Sigmoid colon (tissue), 7 donors: ENCODE measurements at regions of chr1 and their contacts with region 1.

Region 1: DNA sequence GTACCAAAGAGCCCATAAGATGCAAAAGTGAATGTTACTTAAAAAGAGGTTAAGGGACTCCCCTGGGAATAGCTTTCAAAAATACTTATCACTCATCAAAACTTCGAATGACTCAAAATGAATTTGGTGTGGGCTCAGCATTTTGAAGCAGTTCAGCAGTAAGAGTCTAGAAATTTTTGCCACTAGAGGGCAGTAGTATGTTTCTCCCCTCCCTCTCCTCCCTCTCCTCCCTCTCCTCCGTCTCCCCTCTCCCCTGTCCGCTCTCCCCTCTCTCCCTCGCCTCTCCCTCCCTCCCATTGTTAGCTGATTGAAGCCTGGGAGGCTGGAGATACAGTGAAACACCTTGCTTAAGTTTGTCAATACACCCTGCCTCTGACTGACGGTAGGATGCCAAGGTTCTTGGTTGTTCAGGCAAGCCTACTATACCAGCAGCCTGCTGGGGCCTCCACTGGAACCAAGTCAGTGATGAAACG is 70.8 kb upstream of the TENT5C start:
- DNase-seq: no peak
- H3K4me3 ChIP-seq: no peak overlapping the region
- H3K27ac ChIP-seq: no peak overlapping the region
- H3K4me1 ChIP-seq: no peaks in the 10 kb centered on the region
- H3K27me3 ChIP-seq: no peaks in the 10 kb centered on the region
- CTCF ChIP-seq: peak; percentile 50 to 74 (median 70)
- EP300 ChIP-seq: no peak
- POLR2A ChIP-seq: no peak

Region 2: GRCh38 chr1:117674521-117675397 is 139.7 kb after region 1 on chr1:
- intact Hi-C with region 1: loop called (anchors 2 kb)
- DNase-seq: no peak
- H3K4me3 ChIP-seq: no peak overlapping the region
- H3K27ac ChIP-seq: no peak overlapping the region
- H3K4me1 ChIP-seq: peaks cover 2 to 28% (median 24%) of the 10 kb centered on the region in 4 donors
- H3K27me3 ChIP-seq: no peaks in the 10 kb centered on the region
- CTCF ChIP-seq: no peak
- EP300 ChIP-seq: no peak
- POLR2A ChIP-seq: no peak